Activated CD4-positive, alpha-beta memory T cell treated with anti-CD3 and anti-CD28 coated beads, Interleukin-2, amount 10 ng/mL, durations not matched to agents 7 days and 5 days (primary cell): ENCODE measurements at regions of chr1 and their contacts with region 1.

Region 1: DNA sequence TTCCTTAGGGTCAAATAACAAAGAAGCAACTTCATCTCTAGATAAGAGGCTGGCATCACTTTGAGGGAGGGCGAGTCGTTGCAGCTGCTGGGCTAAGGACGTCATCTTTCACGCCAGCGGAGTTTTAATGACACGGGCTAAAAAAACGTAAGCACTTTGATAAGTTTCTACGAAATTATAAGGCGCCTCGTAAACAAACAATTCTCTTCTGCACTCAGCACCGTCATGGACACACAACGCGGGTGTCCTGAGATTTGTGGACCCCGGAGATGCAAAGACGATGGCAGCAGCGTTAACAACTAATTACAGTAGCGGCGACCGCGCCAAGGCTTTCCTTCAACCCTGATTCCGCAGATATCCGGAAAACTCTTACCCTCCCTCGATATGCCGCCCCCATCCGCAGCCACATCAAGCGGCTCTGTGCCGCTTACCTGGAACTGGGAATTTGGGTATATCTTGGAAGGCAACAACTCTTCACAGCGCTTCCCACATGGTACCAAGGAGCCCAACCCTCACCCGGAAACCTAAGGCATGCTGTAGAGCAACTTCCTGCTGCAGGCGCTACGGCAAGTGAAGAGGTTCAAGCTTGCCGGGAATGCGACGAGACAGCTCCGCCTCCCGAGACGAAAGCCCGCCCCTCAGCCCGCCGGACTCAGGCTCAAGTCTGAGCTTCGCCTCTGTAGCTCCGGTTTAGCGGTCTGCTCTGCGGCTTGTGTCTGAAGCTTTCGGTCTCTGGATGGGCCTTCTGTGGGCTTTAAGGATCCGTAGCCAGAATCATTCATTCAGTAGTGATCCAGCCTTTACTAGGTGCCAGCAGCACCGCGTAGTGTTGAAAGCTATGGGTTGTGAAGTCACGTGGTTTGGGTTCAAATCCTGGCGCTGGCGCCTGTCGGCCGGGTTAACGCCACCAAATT is at the start of gene HEATR1:
- DNase-seq: peak; percentile 88
- H3K4me3 Mint-ChIP-seq: peak within 1 kb of the TSS; percentile 92
- H3K27ac Mint-ChIP-seq: peak within 1 kb of the TSS; percentile 84
- H3K4me1 Mint-ChIP-seq: peaks cover 27% of the 10 kb centered on the region
- H3K27me3 Mint-ChIP-seq: peaks cover 13% of the 10 kb centered on the region
- total RNA-seq, gene HEATR1: 32.9 to 33.9 TPM

Region 2: GRCh38 chr1:236795035-236795756 is 190.9 kb after region 1 on chr1 and contains the start of gene MTR:
- CTCF ChIA-PET with region 1: interaction called, 4 read pairs
- POLR2A ChIA-PET with region 1: interaction called, 28 read pairs
- DNase-seq: peak; percentile 97
- H3K4me3 Mint-ChIP-seq: peak within 1 kb of the TSS; percentile 89
- H3K27ac Mint-ChIP-seq: peak within 1 kb of the TSS; percentile 92
- H3K4me1 Mint-ChIP-seq: peaks cover 29% of the 10 kb centered on the region
- H3K27me3 Mint-ChIP-seq: peaks cover 5% of the 10 kb centered on the region
- total RNA-seq, gene MTR: 43.9 to 46.4 TPM